ENCODE measurements at regions of chr12 and their contacts with region 1.

Region 1: DNA sequence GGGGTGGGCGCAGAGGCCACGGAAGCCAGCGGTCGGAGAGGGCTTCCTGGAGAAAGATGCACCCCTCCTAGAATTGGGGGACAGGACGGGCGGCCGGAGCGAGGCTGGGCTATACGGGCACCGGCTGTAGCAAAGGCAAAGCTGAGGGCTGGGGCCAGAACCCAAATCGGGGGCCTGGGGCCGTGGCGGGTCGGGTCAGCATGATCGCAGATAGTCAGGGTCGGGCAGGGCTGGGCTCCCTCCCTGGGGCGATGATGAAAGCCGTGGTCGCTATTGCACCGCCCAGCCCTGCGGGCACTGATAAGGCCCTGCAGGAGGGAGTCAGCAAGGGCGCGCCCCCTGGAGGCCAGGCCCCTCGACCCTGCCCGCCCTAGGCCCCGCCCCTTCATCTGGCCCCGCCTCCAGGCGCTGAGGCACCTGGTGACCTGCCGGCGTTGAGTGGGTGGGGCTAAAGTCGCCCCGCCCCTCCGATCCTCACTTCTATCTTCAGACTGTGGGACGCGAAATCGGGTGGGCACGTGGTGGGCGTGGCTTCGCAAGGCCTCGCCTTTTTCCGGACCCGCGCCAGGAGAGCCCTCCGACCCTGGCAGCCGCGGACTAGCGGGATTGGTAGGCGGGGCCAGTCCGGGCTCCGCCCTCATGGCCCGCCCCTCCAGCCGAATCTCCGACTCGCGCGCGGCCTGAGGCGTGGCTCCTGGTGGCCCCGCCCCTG is 418 bp upstream of the SH2B3 start:
- DNase-seq: peak; percentile 99
- ATAC-seq: peak; percentile 77
- H3K4me3 Mint-ChIP-seq: peak overlapping the region; percentile 70
- H3K27ac Mint-ChIP-seq: peak overlapping the region; percentile 89
- H3K4me1 Mint-ChIP-seq: peaks cover 57% of the 10 kb centered on the region
- H3K27me3 Mint-ChIP-seq: peaks cover 20% of the 10 kb centered on the region

Region 2: GRCh38 chr12:111384596-111384995 is 20.7 kb before region 1 on chr12:
- CTCF ChIA-PET with region 1: no interaction called
- DNase-seq: no peak
- ATAC-seq: no peak
- H3K4me3 Mint-ChIP-seq: no peak overlapping the region
- H3K27ac Mint-ChIP-seq: no peak overlapping the region
- H3K4me1 Mint-ChIP-seq: no peaks in the 10 kb centered on the region
- H3K27me3 Mint-ChIP-seq: peaks cover 7% of the 10 kb centered on the region

Region 3: GRCh38 chr12:111434680-111435338 is 29.5 kb after region 1 on chr12:
- CTCF ChIA-PET with region 1: interaction called, 950 read pairs
- DNase-seq: peak; percentile 91
- ATAC-seq: peak; percentile 68
- H3K4me3 Mint-ChIP-seq: peak overlapping the region; percentile 63
- H3K27ac Mint-ChIP-seq: peak overlapping the region; percentile 95
- H3K4me1 Mint-ChIP-seq: peaks cover 89% of the 10 kb centered on the region
- H3K27me3 Mint-ChIP-seq: no peaks in the 10 kb centered on the region

Measured in activated CD8-positive, alpha-beta memory T cell treated with anti-CD3 and anti-CD28 coated beads, Interleukin-2, amount 10 ng/mL, durations not matched to agents 7 days and 5 days (primary cell).